ENCODE measurements at regions of chr1 and their contacts with region 1.

Region 1: DNA sequence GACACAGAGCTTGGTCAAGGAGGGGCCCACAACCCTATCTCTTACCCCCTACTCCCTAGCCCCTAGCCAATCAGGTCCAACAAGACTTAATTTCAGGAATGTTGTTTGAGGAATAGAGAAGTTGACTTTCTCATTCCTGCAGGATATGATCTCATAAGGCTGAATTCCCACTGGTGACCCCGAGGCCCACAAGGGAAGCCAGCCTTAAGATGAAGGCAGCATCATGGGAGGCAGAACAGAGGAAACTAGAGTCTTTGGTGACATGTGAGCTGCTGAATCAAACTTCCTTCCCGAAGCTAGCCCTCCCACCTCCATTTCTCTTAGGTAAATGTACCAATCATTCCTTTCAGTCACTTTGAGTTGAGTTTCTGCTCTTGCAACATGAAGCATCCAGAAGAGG is 9.1 kb upstream of the PDIK1L start:
- DNase-seq: no peak
- ATAC-seq: no peak

Region 2: DNA sequence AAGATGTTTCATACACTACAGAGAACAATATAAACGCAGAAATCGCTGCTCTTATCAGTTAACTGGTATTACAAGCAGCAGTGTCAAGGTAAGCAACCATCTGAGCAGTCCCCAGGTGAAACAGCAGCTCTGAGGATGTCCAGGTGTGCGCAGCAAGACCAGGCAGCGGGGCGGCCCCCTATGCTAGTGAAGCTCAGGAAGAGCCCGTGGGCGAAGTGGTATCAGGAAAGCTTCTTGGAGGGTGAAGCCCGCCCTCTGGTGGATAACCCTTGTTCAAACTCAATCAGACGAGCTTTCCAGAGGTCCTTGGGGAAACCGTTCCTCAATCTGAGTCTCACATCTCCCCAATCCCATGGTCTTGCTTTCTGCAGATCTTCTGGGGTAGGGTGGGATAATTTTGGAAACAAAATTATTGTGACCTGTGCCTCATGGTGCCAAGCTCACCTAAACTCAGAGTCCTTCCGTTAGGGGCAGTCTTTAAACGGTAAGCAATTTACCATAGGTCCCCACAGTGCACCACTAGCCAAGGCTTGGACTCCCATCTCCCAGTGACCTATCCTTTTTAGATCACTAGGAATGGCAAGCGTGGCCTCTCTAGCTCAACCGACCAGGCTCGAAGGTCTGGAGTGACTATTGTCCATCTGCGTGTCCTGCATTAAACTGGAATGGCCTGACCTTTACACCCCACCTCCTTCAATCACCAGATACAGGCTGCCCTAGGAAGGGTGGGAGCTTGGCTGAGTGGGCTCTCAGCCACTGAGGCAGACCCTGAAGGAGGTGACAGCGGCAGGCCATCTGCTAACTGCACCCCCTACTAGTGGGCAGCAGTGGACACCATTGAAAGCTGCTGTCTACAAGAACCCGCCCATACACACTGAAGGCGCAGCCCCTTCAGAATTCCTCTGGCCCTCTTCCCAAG is 42.8 kb after region 1 on chr1:
- intact Hi-C with region 1: loop called (anchors 2 kb)
- DNase-seq: peak; percentile 72
- ATAC-seq: peak; percentile 96

Region 3: GRCh38 chr1:26233903-26234643 is 131.5 kb after region 1 on chr1 and contains the start of gene CEP85:
- intact Hi-C with region 1: loop called (anchors 5 kb)
- DNase-seq: peak; percentile 99
- ATAC-seq: peak; percentile 99
- total RNA-seq, gene CEP85: 82.5 TPM

Measured in Right ventricle myocardium superior (tissue), 1 donor.